ENCODE measurements at regions of chr15 and their contacts with region 1.

Region 1: GRCh38 chr15:73141216-73141900 is 89.1 kb downstream of the NEO1 start:
- DNase-seq: peak in 3 of 14 experiments; percentile 29 to 60 (median 42)
- ATAC-seq: peak; percentile 70
- H3K4me3 ChIP-seq: no peak overlapping the region
- H3K4me3 Mint-ChIP-seq: no peak overlapping the region
- H3K27ac ChIP-seq: peak overlapping the region in 1 of 2 donors; percentile 27
- H3K27ac Mint-ChIP-seq: peak overlapping the region; percentile 19
- H3K4me1 ChIP-seq: peaks cover 12% of the 10 kb centered on the region
- H3K4me1 Mint-ChIP-seq: peaks cover 18% of the 10 kb centered on the region
- H3K27me3 ChIP-seq: no peaks in the 10 kb centered on the region
- H3K27me3 Mint-ChIP-seq: peaks cover 4% of the 10 kb centered on the region
- CTCF ChIP-seq: no peak

Region 2: DNA sequence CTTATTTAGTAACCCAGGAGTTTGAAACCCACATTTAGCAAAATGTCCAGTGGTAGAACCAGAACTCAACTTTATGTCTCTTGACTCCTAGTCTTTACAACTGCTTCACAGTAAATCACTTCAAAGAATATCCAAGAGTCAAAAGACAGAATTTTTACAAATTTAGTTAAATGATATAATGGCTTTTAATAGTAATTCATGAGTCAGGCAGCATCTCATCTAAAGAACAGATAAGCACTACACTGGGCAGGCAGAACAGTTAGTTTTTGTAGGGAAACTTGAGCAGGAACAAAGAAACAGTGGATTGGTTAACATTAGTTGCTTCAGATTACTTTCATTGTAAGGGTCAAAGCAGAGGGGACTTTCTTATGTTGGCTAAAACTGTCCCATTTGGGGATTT is 31.1 kb after region 1 on chr15:
- CTCF ChIA-PET with region 1: no interaction called
- POLR2A ChIA-PET with region 1: no interaction called
- intact Hi-C with region 1: loop called in 1 of 2 experiments (anchors 1 kb)
- DNase-seq: no peak
- ATAC-seq: no peak
- H3K4me3 ChIP-seq: no peak overlapping the region
- H3K4me3 Mint-ChIP-seq: no peak overlapping the region
- H3K27ac ChIP-seq: no peak overlapping the region
- H3K27ac Mint-ChIP-seq: no peak overlapping the region
- H3K4me1 ChIP-seq: no peaks in the 10 kb centered on the region
- H3K4me1 Mint-ChIP-seq: no peaks in the 10 kb centered on the region
- H3K27me3 ChIP-seq: no peaks in the 10 kb centered on the region
- H3K27me3 Mint-ChIP-seq: no peaks in the 10 kb centered on the region
- CTCF ChIP-seq: no peak

Region 3: DNA sequence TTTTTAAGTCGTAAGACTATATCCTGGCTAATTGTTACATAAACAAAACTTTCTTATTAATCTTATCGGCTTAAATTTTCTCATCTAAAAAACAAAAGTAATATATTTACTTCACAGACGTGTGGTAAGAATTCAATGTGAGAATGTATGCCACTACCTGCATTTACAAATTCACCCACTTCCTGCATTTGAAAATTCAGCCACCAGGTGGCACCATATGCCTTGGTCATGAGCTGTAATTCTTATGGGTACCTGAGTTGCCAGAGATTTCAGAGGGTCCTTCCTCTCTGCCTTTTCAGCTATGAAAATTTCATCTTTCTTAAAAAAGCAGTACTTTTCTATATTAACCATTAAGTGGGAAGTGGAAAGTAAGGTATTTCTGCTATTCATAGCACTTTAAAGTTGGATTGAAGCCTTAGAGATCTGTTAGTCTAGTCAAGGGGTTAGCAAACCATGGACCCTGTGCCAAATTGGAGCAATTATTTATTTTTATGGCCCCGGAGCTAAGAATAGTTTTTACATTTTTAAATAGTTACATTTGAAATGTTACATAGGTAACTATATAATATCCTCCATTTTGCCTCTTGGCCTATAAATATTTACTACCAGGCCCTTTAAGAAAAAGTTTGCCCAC is 99.6 kb after region 1 on chr15:
- CTCF ChIA-PET with region 1: no interaction called
- POLR2A ChIA-PET with region 1: no interaction called
- intact Hi-C with region 1: no loop called
- DNase-seq: peak; percentile 41 to 80 (median 66)
- ATAC-seq: peak; percentile 57
- H3K4me3 ChIP-seq: no peak overlapping the region
- H3K4me3 Mint-ChIP-seq: no peak overlapping the region
- H3K27ac ChIP-seq: no peak overlapping the region
- H3K27ac Mint-ChIP-seq: no peak overlapping the region
- H3K4me1 ChIP-seq: no peaks in the 10 kb centered on the region
- H3K4me1 Mint-ChIP-seq: no peaks in the 10 kb centered on the region
- H3K27me3 ChIP-seq: no peaks in the 10 kb centered on the region
- H3K27me3 Mint-ChIP-seq: no peaks in the 10 kb centered on the region
- CTCF ChIP-seq: peak; percentile 90

Measured in CD4-positive, alpha-beta T cell (primary cell).